MCF 10A (cell line): ENCODE measurements at regions of chrX and their contacts with region 1.

Region 1: DNA sequence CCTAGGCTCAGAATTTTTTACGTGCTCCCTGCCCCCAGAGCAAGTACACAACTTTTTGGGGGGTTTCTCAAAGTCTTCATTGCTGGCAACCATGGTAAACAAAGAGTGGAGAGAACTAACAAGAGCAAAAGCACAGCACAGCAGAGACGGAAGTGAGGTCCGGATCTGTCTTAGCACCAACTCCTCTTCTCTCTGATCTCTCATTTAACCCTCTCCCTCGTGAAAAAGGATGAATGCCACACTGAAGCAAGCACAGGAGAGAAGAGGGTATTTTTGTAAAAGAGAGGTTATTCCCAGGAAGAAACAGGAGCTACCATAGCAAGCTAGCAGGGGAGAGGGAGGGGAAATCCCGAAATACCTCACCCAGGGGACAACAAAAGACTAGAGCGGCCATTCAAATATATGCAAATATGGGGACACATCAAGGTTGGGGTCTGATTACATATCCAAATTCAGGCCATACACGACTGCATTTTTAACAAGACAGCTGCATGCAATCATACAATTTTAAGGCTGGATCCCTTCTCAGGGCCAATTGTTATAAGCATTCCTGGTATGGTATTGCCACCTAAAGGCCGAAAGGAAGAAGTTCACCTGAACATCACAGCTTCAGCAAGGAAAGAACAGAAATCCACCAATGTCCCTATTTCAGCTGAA is 46.6 kb downstream of the CD40LG start:
- DNase-seq: peak; percentile 52
- H3K4me3 Mint-ChIP-seq: no peak overlapping the region
- H3K27ac Mint-ChIP-seq: no peak overlapping the region
- H3K4me1 Mint-ChIP-seq: no peaks in the 10 kb centered on the region
- H3K27me3 Mint-ChIP-seq: peaks cover 49% of the 10 kb centered on the region
- CTCF ChIP-seq: peak; percentile 79

Region 2: DNA sequence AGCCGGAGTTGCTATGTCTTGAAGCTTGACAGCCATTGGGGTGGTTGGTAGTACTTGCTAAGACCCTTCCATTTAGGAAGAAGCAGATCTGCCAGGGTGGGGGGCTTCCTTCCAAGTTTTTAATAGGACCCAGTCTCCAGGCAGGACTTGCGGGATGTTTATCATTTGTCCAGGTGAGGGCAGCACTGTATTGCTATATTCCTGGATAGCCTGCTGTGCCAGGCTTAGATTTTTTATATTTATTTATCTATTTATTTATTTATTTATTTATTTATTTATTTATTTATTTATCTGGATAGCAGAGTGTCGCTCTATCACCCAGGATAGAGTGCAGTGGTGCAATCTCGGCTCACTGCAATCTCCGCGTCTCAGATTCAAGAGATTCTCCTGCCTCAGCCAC is 1068.6 kb before region 1 on chrX:
- CTCF ChIA-PET with region 1: no interaction called
- POLR2A ChIA-PET with region 1: no interaction called
- intact Hi-C with region 1: loop called (anchors 10 kb)
- DNase-seq: peak; percentile 36
- H3K4me3 Mint-ChIP-seq: no peak overlapping the region
- H3K27ac Mint-ChIP-seq: no peak overlapping the region
- H3K4me1 Mint-ChIP-seq: no peaks in the 10 kb centered on the region
- H3K27me3 Mint-ChIP-seq: peaks cover 3% of the 10 kb centered on the region
- CTCF ChIP-seq: peak; percentile 16

Region 3: DNA sequence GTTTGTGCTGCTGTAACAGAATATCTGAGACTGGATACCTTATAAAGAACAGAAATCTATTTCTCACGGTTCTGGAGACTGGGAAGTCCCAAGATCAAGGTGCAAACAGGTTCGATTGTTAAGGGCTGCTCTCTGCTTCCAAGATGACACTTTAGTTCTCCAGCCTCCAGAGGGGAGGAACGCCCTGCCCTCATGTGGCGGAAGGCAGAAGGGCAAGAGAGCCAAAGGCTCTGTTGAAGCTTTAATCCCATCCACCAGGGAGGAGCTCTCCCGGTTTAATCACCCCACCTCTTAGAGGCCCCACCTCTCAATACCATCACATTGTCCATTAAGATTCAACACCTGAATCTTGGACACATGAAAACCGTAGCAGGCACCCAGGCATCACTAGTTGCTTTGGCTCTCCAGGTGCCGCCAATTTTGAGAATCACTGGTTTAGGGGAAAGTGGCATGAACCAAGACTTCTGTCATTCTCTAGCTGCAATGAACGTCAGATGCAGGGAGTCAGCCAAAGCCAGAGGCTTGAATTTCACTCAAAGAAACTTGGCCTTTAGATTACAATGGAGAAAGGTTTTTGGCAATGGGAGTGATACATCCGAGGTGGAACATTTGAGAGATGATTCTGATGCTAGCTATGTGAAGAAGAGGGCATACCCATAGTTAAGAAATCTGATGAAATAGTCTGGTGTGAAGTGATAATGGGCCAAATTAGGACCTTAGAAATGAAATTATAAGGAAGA is 531.6 kb before region 1 on chrX:
- CTCF ChIA-PET with region 1: no interaction called
- POLR2A ChIA-PET with region 1: no interaction called
- intact Hi-C with region 1: loop called (anchors 2 kb)
- DNase-seq: peak; percentile 70
- H3K4me3 Mint-ChIP-seq: no peak overlapping the region
- H3K27ac Mint-ChIP-seq: no peak overlapping the region
- H3K4me1 Mint-ChIP-seq: peaks cover 6% of the 10 kb centered on the region
- H3K27me3 Mint-ChIP-seq: peaks cover 82% of the 10 kb centered on the region
- CTCF ChIP-seq: peak; percentile 70

Region 4: GRCh38 chrX:136496770-136497598 is 197.6 kb before region 1 on chrX and contains the start of gene HTATSF1:
- CTCF ChIA-PET with region 1: no interaction called
- POLR2A ChIA-PET with region 1: no interaction called
- intact Hi-C with region 1: loop called (anchors 10 kb)
- DNase-seq: peak; percentile 87
- H3K4me3 Mint-ChIP-seq: peak within 1 kb of the TSS; percentile 81
- H3K27ac Mint-ChIP-seq: peak within 1 kb of the TSS; percentile 89
- H3K4me1 Mint-ChIP-seq: no peaks in the 10 kb centered on the region
- H3K27me3 Mint-ChIP-seq: peaks cover 22% of the 10 kb centered on the region
- CTCF ChIP-seq: no peak
- total RNA-seq, gene HTATSF1: 17.6 and 23.3 TPM in 2 replicates

Region 5: DNA sequence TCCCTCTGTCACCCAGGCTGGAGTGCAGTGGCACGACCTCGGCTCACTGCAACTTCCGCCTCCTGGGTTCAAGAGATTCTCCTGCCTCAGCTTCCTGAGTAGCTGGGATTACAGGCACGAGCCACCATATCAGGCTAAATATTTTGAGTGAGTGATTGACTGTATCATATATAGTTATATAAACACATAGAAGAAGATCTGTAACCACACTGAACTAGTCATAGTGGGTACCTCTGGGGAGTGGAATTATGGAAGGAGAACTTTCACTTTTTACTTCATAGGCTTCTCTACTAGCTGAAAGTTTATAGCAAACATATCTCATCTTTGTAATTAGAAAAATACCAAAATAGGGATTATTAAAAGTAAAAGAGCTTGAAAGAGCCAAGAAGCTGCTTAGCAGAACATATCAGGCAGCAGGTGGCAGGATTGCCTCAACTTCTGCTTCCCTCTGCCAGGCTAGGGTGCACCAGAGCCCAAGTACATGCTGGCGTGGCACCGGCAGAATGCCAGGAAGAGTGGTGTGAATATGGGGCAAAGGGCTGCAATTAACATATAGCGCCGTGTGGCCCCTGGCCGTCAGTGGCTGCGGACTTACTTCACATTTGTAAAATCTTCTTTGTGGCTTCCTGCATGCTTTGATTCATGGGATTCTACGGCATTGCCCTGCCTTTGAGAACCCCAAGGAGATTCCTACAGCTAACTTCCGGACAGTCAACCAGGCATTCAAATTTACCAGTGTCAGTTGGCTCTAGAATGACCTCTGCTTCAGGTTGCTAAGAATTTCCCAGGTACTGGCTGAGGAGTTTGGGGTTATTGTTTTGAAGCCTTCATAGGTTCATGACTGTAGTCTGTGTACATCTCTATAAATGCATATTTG is 86.0 kb before region 1 on chrX:
- CTCF ChIA-PET with region 1: interaction called, 19 read pairs
- POLR2A ChIA-PET with region 1: interaction called, 5 read pairs
- intact Hi-C with region 1: loop called (anchors 1 kb)
- DNase-seq: peak; percentile 34
- H3K4me3 Mint-ChIP-seq: no peak overlapping the region
- H3K27ac Mint-ChIP-seq: no peak overlapping the region
- H3K4me1 Mint-ChIP-seq: peaks cover 5% of the 10 kb centered on the region
- H3K27me3 Mint-ChIP-seq: peaks cover 46% of the 10 kb centered on the region
- CTCF ChIP-seq: peak; percentile 20

Region 6: DNA sequence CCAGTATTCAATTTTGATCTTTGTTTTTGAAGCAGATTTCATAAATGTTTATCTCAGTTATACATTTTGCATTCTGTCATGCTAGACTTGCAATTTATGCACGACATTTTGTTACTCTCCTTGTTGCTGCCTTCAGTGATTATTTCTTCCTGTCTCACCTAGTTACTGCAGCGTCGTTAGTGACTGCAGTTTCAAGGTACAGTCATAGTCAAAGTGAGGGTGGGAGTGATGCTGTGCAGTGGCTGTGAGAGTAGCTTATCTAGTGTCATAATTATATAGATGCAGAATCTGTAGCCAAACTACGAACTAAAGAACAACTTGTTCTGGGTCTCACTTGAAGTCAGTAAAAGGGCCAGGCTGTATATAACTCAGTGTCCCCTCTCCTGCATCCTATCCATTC is 269.4 kb after region 1 on chrX:
- CTCF ChIA-PET with region 1: no interaction called
- POLR2A ChIA-PET with region 1: no interaction called
- intact Hi-C with region 1: no loop called
- DNase-seq: no peak
- H3K4me3 Mint-ChIP-seq: no peak overlapping the region
- H3K27ac Mint-ChIP-seq: no peak overlapping the region
- H3K4me1 Mint-ChIP-seq: no peaks in the 10 kb centered on the region
- H3K27me3 Mint-ChIP-seq: no peaks in the 10 kb centered on the region
- CTCF ChIP-seq: no peak